GM18951 (cell line): ENCODE measurements at regions of chr4 and their contacts with region 1.

Region 1: DNA sequence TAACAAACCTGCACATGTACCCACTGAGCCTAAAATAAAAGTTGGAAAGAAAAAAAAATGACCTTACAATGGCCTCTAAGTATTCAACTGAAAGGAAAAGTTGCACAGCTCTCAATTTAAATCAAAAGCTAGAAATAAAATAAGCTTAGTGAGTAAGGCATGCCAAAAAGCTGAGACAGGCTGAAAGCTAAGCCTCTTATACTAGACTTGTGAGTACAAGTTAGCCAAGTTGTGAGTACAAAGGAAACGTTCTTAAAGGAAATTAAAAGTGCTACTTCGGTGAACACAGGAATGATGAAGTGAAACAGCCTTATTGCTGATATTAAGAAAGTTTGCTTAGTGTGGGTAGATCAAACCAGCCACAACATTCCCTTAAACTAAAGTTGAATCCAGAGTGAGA is 707.9 kb upstream of the PITX2 start:
- POLR2A ChIP-seq: no peak

Region 2: GRCh38 chr4:111890412-111890811 is 559.6 kb after region 1 on chr4:
- in situ Hi-C with region 1: loop called (anchors 10 kb)
- POLR2A ChIP-seq: no peak